CD14-positive monocyte (primary cell): ENCODE measurements at regions of chr16 and their contacts with region 1.

Region 1: DNA sequence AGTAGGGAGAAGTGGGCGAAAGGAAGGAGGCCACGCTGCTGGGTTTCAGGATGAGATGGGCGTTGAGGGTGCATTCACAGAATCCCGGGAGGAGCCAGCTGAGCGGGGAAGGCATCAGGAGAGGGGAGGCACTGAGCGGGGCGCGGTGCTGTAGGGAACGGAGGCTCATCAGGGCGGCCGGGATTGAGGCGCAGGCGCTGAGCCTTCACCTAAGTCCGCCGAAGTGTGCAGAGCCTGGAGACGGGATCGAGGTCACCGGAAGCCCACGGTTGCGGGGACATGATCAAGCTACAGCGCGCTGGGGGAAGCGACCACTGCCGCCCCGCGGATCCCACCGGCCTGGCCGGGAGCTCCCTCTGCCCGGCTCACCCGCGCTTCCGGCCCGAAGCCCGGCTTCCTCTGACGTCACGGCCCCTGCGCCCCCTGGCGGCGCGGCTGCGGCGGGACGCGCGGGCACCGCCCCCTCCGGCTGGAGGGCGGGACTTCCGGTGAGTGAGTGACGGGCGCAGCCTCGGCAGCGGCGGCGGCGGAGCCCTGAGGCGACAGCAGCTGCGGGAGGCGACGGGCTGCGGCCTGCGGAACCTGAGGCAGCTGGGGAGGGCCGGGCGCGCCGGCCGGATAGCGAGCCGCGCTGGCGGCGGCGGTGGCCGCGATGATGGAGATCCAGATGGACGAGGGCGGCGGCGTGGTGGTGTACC is at the start of gene MAPK8IP3:
- DNase-seq: peak; percentile 86 to 92 (median 87)
- H3K4me3 ChIP-seq: peak within 1 kb of the TSS; percentile 94 to 97 (median 96)
- H3K4me3 Mint-ChIP-seq: peak within 1 kb of the TSS; percentile 96 to 99
- H3K27ac ChIP-seq: peak within 1 kb of the TSS; percentile 72 to 94
- H3K27ac Mint-ChIP-seq: peak within 1 kb of the TSS; percentile 91 to 100 (median 98)
- H3K4me1 ChIP-seq: peaks cover 22 to 26% of the 10 kb centered on the region in 2 donors
- H3K4me1 Mint-ChIP-seq: peaks cover 37% of the 10 kb centered on the region
- H3K27me3 ChIP-seq: no peaks in the 10 kb centered on the region
- H3K27me3 Mint-ChIP-seq: no peaks in the 10 kb centered on the region
- CTCF ChIP-seq: peak; percentile 95
- polyA plus RNA-seq, gene MAPK8IP3: 1.1 to 185 (median 2.1) TPM

Region 2: GRCh38 chr16:1378804-1379303 is 327.0 kb before region 1 on chr16:
- intact Hi-C with region 1: loop called in 1 of 2 experiments (anchors 1 kb)
- DNase-seq: peak; percentile 84 to 96 (median 86)
- H3K4me3 ChIP-seq: peak overlapping the region; percentile 20 to 75 (median 37)
- H3K4me3 Mint-ChIP-seq: peak overlapping the region; percentile 76 to 89
- H3K27ac ChIP-seq: no peak overlapping the region
- H3K27ac Mint-ChIP-seq: peak overlapping the region in 5 of 7 donors; percentile 65 to 88 (median 85)
- H3K4me1 ChIP-seq: peaks cover 12 to 22% of the 10 kb centered on the region in 2 donors
- H3K4me1 Mint-ChIP-seq: peaks cover 17% of the 10 kb centered on the region
- H3K27me3 ChIP-seq: no peaks in the 10 kb centered on the region
- H3K27me3 Mint-ChIP-seq: peaks cover 1 to 3% (median 2%) of the 10 kb centered on the region in 3 donors
- CTCF ChIP-seq: no peak

Region 3: DNA sequence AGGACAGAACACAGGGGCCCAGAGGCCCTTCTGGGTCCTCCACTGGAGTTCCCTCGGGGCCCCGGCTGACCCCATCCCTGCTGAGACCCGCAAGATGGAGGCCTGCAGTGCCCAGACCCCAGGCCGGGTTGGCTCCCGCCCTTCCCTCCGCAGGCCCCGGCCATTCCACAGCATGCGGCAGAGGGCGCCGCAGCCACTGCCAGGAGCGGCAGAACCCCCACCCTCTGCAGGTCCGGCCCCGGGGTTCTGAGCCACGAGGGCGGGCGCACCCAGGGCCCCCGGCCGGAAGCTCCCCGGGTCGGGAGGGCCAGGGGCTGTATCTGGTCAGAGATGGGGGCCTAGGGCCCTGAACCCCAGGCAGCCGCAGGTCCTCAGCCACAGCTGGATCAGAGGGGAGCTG is 277.3 kb before region 1 on chr16:
- intact Hi-C with region 1: loop called in 1 of 2 experiments (anchors 10 kb)
- DNase-seq: peak; percentile 34 to 51 (median 38)
- H3K4me3 ChIP-seq: no peak overlapping the region
- H3K4me3 Mint-ChIP-seq: peak overlapping the region; percentile 27 to 67
- H3K27ac ChIP-seq: no peak overlapping the region
- H3K27ac Mint-ChIP-seq: no peak overlapping the region
- H3K4me1 ChIP-seq: peaks cover 5 to 20% of the 10 kb centered on the region in 2 donors
- H3K4me1 Mint-ChIP-seq: peaks cover 3% of the 10 kb centered on the region
- H3K27me3 ChIP-seq: peaks cover 0 to 24% of the 10 kb centered on the region in 2 donors
- H3K27me3 Mint-ChIP-seq: peaks cover 7 to 34% (median 7%) of the 10 kb centered on the region in 3 donors
- CTCF ChIP-seq: peak; percentile 80

Region 4: DNA sequence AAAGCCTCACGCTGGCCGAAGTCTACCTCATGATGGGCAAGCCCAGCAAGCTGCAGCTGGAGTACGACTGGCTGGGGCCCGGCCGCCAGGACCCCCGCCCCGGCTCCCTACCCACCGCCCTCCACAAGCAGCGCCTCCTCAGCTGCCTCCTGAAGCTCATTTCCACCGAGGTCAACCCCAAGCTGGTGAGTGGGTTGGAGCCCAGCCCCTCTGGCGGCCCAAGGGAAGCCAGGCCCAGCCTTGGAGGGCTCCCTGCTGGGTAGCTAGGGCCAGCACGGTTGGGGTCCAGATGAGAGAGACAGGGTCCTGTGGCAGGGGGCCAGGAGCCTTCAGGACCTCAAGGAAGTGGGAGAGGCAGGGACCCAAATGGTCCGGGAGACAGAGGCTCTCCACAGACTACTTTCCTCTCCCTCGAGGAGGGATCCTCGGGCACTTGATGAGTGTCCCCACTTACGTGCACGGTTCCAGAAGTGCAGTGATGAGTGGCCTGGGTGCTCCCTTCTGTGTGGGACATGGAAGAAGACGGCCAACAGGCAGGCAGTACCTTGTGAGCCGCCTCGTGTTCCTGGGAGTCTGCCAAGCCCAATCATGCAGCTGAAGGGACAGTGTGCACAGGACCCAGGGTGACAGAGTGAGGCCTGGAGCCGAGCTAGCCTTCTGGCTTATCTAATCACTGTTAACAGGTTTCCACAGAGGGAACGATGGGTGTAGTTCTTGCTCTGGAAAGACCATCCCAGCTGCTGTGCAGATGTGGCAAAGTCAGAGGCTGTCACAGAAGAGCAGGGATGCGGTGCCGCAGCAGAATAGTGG is 48.8 kb before region 1 on chr16:
- intact Hi-C with region 1: no loop called
- DNase-seq: no peak
- H3K4me3 ChIP-seq: no peak overlapping the region
- H3K4me3 Mint-ChIP-seq: no peak overlapping the region
- H3K27ac ChIP-seq: no peak overlapping the region
- H3K27ac Mint-ChIP-seq: peak overlapping the region in 1 of 7 donors; percentile 59
- H3K4me1 ChIP-seq: peaks cover 0 to 5% of the 10 kb centered on the region in 2 donors
- H3K4me1 Mint-ChIP-seq: peaks cover 7% of the 10 kb centered on the region
- H3K27me3 ChIP-seq: no peaks in the 10 kb centered on the region
- H3K27me3 Mint-ChIP-seq: no peaks in the 10 kb centered on the region
- CTCF ChIP-seq: no peak

Region 5: DNA sequence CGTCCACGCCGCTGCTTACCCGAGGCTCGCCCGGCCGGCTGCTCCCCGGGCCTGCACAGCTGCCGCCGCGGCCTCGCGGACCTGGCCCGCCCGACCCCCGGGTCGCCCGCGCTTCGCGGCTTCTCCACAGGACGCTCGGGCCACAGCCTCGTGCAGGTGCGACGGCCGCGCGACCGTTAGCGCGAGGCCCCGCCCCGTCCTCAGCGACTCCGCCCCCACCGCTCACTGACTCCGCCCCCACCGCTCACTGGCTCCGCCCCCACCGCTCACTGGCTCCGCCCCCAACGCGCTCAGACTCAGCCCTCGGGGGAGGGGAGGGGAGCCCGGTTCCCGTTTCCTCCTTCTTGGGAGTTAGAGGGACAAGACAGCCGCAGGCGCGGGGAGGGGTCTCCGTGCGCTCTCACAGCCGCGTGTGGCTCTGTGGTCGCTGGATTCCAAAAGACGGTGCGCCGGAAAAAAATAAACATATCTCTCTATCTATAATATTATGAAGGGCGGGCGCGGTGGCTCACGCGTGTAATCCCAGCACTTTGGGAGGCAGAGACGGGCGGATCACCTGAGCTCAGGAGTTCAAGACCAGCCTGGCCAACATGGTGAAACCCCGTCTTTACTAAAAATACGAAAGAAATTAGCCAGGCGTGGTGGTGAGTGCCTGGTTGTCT is 166.3 kb after region 1 on chr16 and contains the start of gene MEIOB:
- intact Hi-C with region 1: no loop called
- DNase-seq: peak; percentile 16 to 52 (median 30)
- H3K4me3 ChIP-seq: peak within 1 kb of the TSS in 1 of 3 experiments; percentile 32
- H3K4me3 Mint-ChIP-seq: peak within 1 kb of the TSS; percentile 62 to 92
- H3K27ac ChIP-seq: no peak within 1 kb of the TSS
- H3K27ac Mint-ChIP-seq: peak within 1 kb of the TSS in 1 of 7 donors; percentile 58
- H3K4me1 ChIP-seq: peaks cover 0 to 8% of the 10 kb centered on the region in 2 donors
- H3K4me1 Mint-ChIP-seq: peaks cover 7% of the 10 kb centered on the region
- H3K27me3 ChIP-seq: peaks cover 10 to 28% of the 10 kb centered on the region in 2 donors
- H3K27me3 Mint-ChIP-seq: peaks cover 26 to 40% (median 39%) of the 10 kb centered on the region in 3 donors
- CTCF ChIP-seq: no peak
- polyA plus RNA-seq, gene MEIOB: not detected

Region 6: GRCh38 chr16:1964506-1965395 is 258.9 kb after region 1 on chr16 and contains the start of gene RPS2:
- intact Hi-C with region 1: no loop called
- DNase-seq: peak; percentile 98 to 100 (median 99)
- H3K4me3 ChIP-seq: peak within 1 kb of the TSS; percentile 55 to 91 (median 82)
- H3K4me3 Mint-ChIP-seq: peak within 1 kb of the TSS; percentile 89 to 94
- H3K27ac ChIP-seq: peak within 1 kb of the TSS; percentile 93
- H3K27ac Mint-ChIP-seq: peak within 1 kb of the TSS; percentile 93 to 97 (median 95)
- H3K4me1 ChIP-seq: peaks cover 34 to 40% of the 10 kb centered on the region in 2 donors
- H3K4me1 Mint-ChIP-seq: peaks cover 38% of the 10 kb centered on the region
- H3K27me3 ChIP-seq: no peaks in the 10 kb centered on the region
- H3K27me3 Mint-ChIP-seq: peaks cover 0 to 2% (median 0%) of the 10 kb centered on the region in 3 donors
- CTCF ChIP-seq: no peak
- polyA plus RNA-seq, gene RPS2: 1,849 to 2,136 (median 1,893) TPM